ENCODE measurements at regions of chr2 and their contacts with region 1.

Region 1: GRCh38 chr2:224369028-224369632 is 32.8 kb downstream of the FAM124B start:
- DNase-seq: peak; percentile 58
- ATAC-seq: no peak
- H3K4me3 ChIP-seq: no peak overlapping the region
- H3K4me3 Mint-ChIP-seq: no peak overlapping the region
- H3K27ac ChIP-seq: no peak overlapping the region
- H3K27ac Mint-ChIP-seq: no peak overlapping the region
- H3K4me1 ChIP-seq: no peaks in the 10 kb centered on the region
- H3K4me1 Mint-ChIP-seq: no peaks in the 10 kb centered on the region
- H3K27me3 ChIP-seq: no peaks in the 10 kb centered on the region
- H3K27me3 Mint-ChIP-seq: no peaks in the 10 kb centered on the region
- CTCF ChIP-seq: peak; percentile 81

Region 2: DNA sequence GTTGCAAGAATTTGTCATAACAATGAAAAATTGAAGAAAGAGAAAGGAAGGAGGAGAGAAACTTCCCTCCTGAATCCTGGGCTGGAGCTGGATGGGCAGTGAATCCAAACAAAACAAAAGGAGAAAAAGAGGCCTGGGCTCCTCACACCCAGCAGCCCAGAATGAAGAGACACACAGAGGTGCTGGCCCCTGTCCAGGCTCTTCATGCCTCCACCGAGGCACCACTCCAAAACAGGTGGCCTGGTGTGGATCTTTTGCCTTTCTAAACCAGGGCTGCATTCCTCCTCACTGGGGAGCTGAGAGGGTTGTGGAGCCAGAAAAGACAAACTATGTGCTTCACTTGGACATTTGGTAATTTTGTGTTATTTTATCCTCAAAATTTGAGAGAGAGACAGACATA is 43.2 kb before region 1 on chr2:
- CTCF ChIA-PET with region 1: no interaction called
- POLR2A ChIA-PET with region 1: no interaction called
- intact Hi-C with region 1: no loop called
- DNase-seq: no peak
- ATAC-seq: no peak
- H3K4me3 ChIP-seq: no peak overlapping the region
- H3K4me3 Mint-ChIP-seq: no peak overlapping the region
- H3K27ac ChIP-seq: no peak overlapping the region
- H3K27ac Mint-ChIP-seq: no peak overlapping the region
- H3K4me1 ChIP-seq: no peaks in the 10 kb centered on the region
- H3K4me1 Mint-ChIP-seq: no peaks in the 10 kb centered on the region
- H3K27me3 ChIP-seq: peaks cover 0 to 14% (median 6%) of the 10 kb centered on the region in 4 experiments
- H3K27me3 Mint-ChIP-seq: peaks cover 46% of the 10 kb centered on the region
- CTCF ChIP-seq: no peak

Region 3: GRCh38 chr2:224381521-224382279 is 12.6 kb after region 1 on chr2:
- CTCF ChIA-PET with region 1: interaction called, 17 read pairs
- POLR2A ChIA-PET with region 1: no interaction called
- intact Hi-C with region 1: no loop called
- DNase-seq: no peak
- ATAC-seq: no peak
- H3K4me3 ChIP-seq: no peak overlapping the region
- H3K4me3 Mint-ChIP-seq: no peak overlapping the region
- H3K27ac ChIP-seq: no peak overlapping the region
- H3K27ac Mint-ChIP-seq: no peak overlapping the region
- H3K4me1 ChIP-seq: peaks cover 3 to 11% of the 10 kb centered on the region in 2 donors
- H3K4me1 Mint-ChIP-seq: peaks cover 14% of the 10 kb centered on the region
- H3K27me3 ChIP-seq: no peaks in the 10 kb centered on the region
- H3K27me3 Mint-ChIP-seq: no peaks in the 10 kb centered on the region
- CTCF ChIP-seq: no peak

Region 4: GRCh38 chr2:224401641-224402342 is 32.7 kb after region 1 on chr2 and contains the start of gene FAM124B:
- CTCF ChIA-PET with region 1: interaction called, 14 read pairs
- POLR2A ChIA-PET with region 1: no interaction called
- intact Hi-C with region 1: no loop called
- DNase-seq: peak; percentile 51
- ATAC-seq: peak; percentile 56
- H3K4me3 ChIP-seq: peak within 1 kb of the TSS; percentile 14 to 58 (median 44)
- H3K4me3 Mint-ChIP-seq: peak within 1 kb of the TSS; percentile 82
- H3K27ac ChIP-seq: no peak within 1 kb of the TSS
- H3K27ac Mint-ChIP-seq: no peak within 1 kb of the TSS
- H3K4me1 ChIP-seq: peaks cover 27 to 33% of the 10 kb centered on the region in 2 donors
- H3K4me1 Mint-ChIP-seq: peaks cover 16% of the 10 kb centered on the region
- H3K27me3 ChIP-seq: peaks cover 0 to 14% (median 3%) of the 10 kb centered on the region in 4 experiments
- H3K27me3 Mint-ChIP-seq: peaks cover 7% of the 10 kb centered on the region
- CTCF ChIP-seq: no peak
- total RNA-seq, gene FAM124B: 0.34 TPM in 1 of 2 replicates, not detected in the other